Naive thymus-derived CD8-positive, alpha-beta T cell (primary cell): ENCODE measurements at regions of chr6 and their contacts with region 1.

Region 1: DNA sequence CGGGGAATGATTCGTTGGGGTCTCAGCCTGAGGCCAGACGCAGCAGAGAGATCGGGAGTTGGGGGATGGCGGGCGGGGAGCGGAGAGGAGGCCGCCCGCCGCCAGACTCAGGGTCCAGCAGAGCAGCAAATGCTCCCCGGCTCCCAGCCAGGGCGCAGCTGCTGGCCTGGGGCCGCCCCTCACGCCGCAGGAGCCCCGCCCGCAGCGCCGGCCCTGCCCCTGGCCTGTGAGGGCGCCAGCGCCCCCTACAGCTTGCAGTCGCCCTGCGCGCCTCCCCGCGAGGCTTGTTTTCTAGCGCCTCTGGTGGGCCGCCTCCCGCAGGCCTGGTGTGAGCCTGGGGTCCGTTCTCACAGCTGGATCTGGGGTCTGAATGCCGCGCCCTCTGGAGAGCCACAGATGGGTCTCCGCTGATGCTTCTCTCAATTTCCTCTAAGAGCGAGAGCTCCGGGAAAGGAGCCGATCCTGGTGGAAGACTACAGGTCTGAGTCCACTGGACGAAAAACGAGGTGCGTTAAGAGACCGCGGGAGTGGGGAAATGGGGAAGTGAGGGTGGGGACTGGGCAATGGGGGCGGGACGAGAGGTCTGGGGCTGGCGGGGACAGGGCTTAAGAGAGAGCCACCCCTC is 29.9 kb downstream of the TRIM38 start:
- DNase-seq: peak; percentile 82 to 95 (median 94)
- ATAC-seq: peak; percentile 91 to 92
- H3K4me3 Mint-ChIP-seq: peak overlapping the region; percentile 93 to 98 (median 96)
- H3K27ac Mint-ChIP-seq: peak overlapping the region; percentile 91 to 98 (median 96)
- H3K4me1 Mint-ChIP-seq: peaks cover 8 to 39% (median 22%) of the 10 kb centered on the region in 4 donors
- H3K27me3 Mint-ChIP-seq: no peaks in the 10 kb centered on the region

Region 2: DNA sequence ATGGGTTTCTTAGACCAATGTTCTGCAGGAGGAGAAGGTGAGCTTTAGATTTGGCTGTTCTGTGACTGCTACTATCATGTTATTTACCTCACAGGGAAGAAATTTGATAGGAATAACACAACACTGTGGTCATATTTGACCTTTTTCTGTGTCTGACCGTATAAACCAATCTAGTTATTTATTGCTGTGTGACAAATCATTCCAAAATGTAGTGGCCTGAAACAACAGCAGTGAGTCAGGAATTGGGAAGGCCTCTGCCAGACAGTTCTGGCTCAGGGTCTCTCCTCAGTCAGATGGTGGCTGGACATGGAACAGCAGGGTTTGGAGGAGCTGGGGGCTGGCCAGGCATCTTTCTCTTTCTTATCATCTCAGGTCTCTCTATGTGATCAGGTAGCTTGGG is 1089.7 kb before region 1 on chr6:
- POLR2A ChIA-PET with region 1: no interaction called
- DNase-seq: no peak
- ATAC-seq: no peak
- H3K4me3 Mint-ChIP-seq: peak overlapping the region in 9 of 10 donors; percentile 12 to 77 (median 58)
- H3K27ac Mint-ChIP-seq: peak overlapping the region; percentile 86 to 99 (median 96)
- H3K4me1 Mint-ChIP-seq: peaks cover 58 to 100% (median 97%) of the 10 kb centered on the region in 4 donors
- H3K27me3 Mint-ChIP-seq: no peaks in the 10 kb centered on the region

Region 3: GRCh38 chr6:25962149-25963127 is 30.1 kb before region 1 on chr6 and contains the start of gene TRIM38:
- POLR2A ChIA-PET with region 1: interaction called, 12 read pairs
- DNase-seq: peak; percentile 34 to 88 (median 75)
- ATAC-seq: peak; percentile 89 to 90
- H3K4me3 Mint-ChIP-seq: peak within 1 kb of the TSS; percentile 90 to 100 (median 98)
- H3K27ac Mint-ChIP-seq: peak within 1 kb of the TSS; percentile 98 to 100 (median 99)
- H3K4me1 Mint-ChIP-seq: peaks cover 40 to 90% (median 80%) of the 10 kb centered on the region in 4 donors
- H3K27me3 Mint-ChIP-seq: no peaks in the 10 kb centered on the region
- polyA plus RNA-seq, gene TRIM38: 4.3 to 7.4 (median 5.9) TPM

Region 4: DNA sequence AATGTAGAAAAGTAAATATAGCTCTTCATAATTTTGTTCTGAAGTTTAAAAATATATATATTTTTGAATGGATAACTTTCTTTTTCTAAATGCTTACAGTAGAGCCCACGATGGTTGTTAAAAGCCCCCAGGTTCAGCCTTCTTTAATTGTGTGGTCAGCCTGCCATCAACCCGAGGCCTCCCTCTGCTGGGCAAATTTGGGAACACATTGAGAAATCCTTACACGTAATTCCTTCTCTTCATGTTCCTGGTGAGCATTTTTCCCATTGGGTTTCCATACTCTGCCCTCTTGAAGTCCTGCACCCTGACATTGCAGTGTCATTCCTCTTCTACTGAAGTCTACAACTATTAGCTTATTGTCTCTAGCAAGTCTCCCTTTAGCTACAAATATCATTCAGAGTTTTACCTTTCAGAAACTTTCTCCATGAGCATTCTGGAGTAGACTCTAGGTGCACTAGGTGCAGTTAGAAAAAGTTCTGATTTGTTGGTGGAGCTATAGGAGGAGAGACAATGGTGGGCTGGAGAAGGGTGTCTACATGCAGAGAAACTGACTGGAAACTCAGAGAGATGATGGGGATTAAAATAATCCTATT is 10.7 kb after region 1 on chr6:
- POLR2A ChIA-PET with region 1: interaction called, 10 read pairs
- DNase-seq: peak; percentile 15 to 72 (median 42)
- ATAC-seq: peak; percentile 54 to 58
- H3K4me3 Mint-ChIP-seq: no peak overlapping the region
- H3K27ac Mint-ChIP-seq: no peak overlapping the region
- H3K4me1 Mint-ChIP-seq: peaks cover 0 to 8% (median 4%) of the 10 kb centered on the region in 4 donors
- H3K27me3 Mint-ChIP-seq: no peaks in the 10 kb centered on the region

Region 5: DNA sequence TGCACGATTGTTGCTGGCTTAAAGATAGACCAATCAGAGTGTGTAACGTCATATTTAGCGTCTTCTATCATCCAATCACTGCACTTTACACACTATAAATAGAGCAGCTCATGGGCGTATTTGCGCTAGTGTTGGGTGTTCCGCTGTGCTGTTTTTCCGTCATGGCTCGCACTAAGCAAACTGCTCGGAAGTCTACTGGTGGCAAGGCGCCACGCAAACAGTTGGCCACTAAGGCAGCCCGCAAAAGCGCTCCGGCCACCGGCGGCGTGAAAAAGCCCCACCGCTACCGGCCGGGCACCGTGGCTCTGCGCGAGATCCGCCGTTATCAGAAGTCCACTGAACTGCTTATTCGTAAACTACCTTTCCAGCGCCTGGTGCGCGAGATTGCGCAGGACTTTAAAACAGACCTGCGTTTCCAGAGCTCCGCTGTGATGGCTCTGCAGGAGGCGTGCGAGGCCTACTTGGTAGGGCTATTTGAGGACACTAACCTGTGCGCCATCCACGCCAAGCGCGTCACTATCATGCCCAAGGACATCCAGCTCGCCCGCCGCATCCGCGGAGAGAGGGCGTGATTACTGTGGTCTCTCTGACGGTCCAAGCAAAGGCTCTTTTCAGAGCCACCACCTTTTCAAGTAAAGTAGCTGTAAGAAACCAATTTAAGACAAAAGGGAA is 27.9 kb after region 1 on chr6:
- POLR2A ChIA-PET with region 1: interaction called, 62 read pairs
- DNase-seq: peak; percentile 64 to 94 (median 86)
- ATAC-seq: peak; percentile 50 to 57
- H3K4me3 Mint-ChIP-seq: peak overlapping the region; percentile 85 to 100 (median 97)
- H3K27ac Mint-ChIP-seq: peak overlapping the region; percentile 93 to 100 (median 100)
- H3K4me1 Mint-ChIP-seq: peaks cover 8 to 36% (median 25%) of the 10 kb centered on the region in 4 donors
- H3K27me3 Mint-ChIP-seq: no peaks in the 10 kb centered on the region